AG04450 (cell line): ENCODE measurements at regions of chr5 and their contacts with region 1.

Region 1: DNA sequence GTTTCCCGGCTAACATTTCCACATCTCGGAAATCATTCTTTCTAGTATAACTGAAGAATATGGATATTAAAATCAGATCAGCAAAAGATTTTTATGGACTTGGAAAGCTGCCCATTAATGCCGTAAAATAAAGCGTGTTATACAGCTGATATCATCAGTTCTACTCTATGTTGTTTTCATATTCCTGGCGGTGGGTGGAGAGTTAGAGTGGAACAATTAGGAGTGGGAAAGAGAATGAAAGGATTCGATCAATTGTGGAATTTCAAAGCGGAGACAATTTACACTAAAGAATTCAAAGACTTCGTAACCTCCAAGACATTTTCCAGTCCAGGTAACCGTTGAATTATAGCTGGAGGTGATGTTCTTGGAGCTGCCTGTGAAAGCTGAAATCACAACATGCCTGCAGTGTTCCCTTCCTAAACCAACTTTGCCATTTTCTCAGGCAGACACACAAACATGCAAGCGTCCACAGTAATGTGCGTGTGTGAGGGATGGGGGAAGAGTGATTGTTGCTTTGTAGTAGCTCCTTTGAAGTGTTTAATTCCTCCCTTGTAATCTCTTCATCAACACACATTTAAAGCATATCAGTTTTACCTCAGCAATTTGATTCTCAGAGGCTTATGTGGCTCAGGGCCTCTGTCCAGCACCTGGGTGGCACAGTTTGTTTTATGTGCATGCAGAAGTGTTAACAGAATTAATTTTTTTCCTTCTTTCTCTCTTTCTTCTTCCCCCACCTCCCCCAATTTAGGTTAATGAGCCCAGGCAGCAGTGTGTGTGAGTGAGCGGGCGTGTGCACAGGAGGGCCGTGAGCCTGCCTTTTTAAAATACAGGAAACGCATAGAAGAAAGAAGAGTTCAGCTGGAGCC is 544.1 kb downstream of the RAB3C start:
- DNase-seq: no peak
- H3K4me3 ChIP-seq: peak overlapping the region; percentile 42
- H3K27ac ChIP-seq: peak overlapping the region; percentile 97
- H3K27me3 ChIP-seq: no peaks in the 10 kb centered on the region
- CTCF ChIP-seq: no peak

Region 2: GRCh38 chr5:58988938-58989337 is 138.0 kb before region 1 on chr5:
- CTCF ChIA-PET with region 1: no interaction called
- POLR2A ChIA-PET with region 1: no interaction called
- DNase-seq: no peak
- H3K4me3 ChIP-seq: no peak overlapping the region
- H3K27ac ChIP-seq: no peak overlapping the region
- H3K27me3 ChIP-seq: no peaks in the 10 kb centered on the region
- CTCF ChIP-seq: no peak

Region 3: DNA sequence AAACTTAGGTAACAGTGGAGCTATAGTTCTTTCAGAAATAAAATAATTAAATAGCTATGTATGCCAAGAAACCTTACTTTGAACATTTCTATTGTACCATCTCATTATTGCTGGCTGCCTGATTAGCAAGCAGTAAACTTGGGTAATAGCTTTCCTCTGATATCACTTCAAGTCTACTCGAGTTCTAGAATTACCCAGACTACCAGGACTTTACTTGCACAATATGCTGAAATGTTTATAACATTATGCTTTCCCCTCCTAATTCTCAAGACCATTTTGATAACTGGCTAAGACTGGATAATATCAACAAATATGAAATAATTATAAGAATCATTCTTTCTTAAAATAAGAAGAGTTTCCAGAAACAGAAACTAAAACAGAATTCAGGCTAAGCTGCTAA is 31.5 kb before region 1 on chr5:
- CTCF ChIA-PET with region 1: interaction called, 4 read pairs
- POLR2A ChIA-PET with region 1: interaction called, 10 read pairs
- DNase-seq: peak; percentile 29
- H3K4me3 ChIP-seq: no peak overlapping the region
- H3K27ac ChIP-seq: no peak overlapping the region
- H3K27me3 ChIP-seq: no peaks in the 10 kb centered on the region
- CTCF ChIP-seq: no peak